ENCODE measurements at regions of chr1 and their contacts with region 1.

Region 1: DNA sequence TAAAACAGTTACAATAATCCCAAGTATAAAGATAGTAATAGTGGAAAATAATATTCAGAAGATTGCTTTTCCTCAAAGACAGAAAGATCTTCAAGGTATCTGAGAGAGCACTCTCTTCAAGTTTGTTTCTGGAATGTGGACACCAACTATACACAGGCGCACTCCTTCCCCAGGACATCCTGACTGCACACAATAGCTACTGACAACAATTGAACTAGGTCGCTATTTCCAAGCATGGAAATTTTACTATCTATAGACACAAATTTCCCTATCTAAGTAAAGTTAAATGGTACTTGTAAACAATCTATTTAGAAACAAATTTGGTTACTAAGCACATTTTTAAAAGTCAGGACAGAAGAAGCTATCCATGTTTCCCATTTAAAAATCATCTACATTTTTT is 19.1 kb downstream of the ARHGAP29 start:
- DNase-seq: no peak
- ATAC-seq: no peak
- H3K4me3 ChIP-seq: no peak overlapping the region
- H3K27ac ChIP-seq: no peak overlapping the region
- H3K4me1 ChIP-seq: no peaks in the 10 kb centered on the region
- H3K27me3 ChIP-seq: peaks cover 0 to 6% (median 0%) of the 10 kb centered on the region in 4 donors
- CTCF ChIP-seq: no peak

Region 2: DNA sequence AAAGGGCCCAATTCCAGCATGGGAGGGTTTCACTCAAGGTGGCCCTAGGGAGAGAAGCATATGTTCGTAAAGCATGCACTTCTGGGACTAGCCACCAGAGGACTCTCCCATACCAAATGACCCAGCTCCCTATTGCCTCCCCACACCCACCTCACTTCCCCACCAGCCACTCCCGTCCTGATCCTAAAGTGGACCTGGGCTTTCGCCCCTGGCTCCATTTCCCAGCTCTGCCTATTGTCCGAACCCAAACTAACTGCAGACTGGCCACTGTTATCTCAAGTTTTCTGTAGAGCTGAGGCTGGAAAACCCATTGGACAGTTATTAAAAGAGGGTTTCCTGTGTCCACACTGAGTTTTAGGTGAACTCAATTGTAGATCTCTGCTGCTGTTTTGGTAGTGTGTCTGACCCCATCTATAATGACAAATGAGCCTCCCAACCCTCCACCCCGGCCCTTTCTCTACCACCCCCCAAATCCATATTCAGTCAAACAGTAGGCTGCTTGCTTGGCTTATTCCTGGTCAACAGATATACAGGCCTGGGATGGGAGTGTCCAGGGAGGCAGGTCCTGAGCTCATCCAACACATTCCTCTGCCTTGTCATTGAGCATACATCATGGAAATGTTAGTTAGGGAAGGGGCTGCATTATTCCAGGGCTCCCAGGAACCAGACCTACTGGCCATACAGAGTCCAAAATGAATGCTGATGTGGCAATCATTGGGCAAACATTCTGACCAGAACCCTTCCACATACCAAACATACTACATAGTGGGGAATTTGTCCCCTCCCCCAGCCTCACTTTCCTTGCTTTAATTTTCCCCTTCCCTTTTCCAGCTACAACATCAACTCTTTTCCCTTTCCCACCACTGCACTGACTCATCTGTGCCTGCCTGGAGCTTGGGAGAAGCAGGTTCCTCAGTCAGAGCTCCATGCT is 156.6 kb before region 1 on chr1:
- intact Hi-C with region 1: loop called in 1 of 3 experiments (anchors 10 kb)
- DNase-seq: peak in 5 of 6 donors; percentile 56 to 77 (median 60)
- ATAC-seq: peak; percentile 90 to 96 (median 96)
- H3K4me3 ChIP-seq: no peak overlapping the region
- H3K27ac ChIP-seq: no peak overlapping the region
- H3K4me1 ChIP-seq: no peaks in the 10 kb centered on the region
- H3K27me3 ChIP-seq: no peaks in the 10 kb centered on the region
- CTCF ChIP-seq: peak; percentile 74 to 82 (median 78)